Heart left ventricle (tissue), 16 donors: ENCODE measurements at regions of chr2 and their contacts with region 1.

Region 1: DNA sequence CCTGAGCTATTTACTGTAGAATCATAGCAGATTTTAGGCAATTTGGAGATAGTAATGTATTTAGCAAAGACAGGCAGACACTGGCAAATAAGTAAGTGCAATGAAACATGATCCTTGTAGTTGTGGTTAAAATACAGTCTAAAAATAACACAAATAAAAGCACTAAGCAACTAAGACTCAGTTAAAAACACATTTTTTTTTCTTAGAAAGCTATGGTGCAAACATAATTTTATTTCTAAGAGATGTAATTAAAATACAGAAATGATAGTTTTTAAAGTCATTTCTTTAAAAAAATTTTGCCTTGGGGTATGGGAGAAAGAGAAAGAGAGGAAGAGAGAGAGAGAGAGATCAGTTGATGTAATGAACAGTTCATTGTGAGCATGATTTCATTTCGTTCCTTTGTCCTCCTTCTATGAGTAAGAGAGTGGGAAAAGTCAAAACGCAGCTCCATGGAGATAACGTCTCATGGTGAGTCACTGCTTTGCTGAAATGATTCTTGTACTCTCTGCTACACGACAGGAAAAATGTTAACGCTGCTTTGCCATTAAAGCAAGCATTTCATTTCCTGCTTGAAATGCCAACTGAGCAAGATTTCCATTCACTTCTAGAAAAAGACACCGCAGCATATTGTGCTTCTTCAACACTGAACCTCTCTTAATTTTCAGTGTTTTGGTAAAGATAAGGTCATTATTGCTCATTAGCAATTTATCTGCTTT is 61.3 kb upstream of the PGAP1 start:
- DNase-seq: peak in 2 of 5 donors; percentile 13 to 37
- ATAC-seq: peak; percentile 83 to 98 (median 96)
- H3K4me3 ChIP-seq: peak overlapping the region in 8 of 12 donors; percentile 3 to 34 (median 19)
- H3K27ac ChIP-seq: peak overlapping the region in 11 of 12 donors; percentile 51 to 84 (median 64)
- H3K4me1 ChIP-seq: peaks cover 0 to 42% (median 15%) of the 10 kb centered on the region in 12 donors
- H3K27me3 ChIP-seq: no peaks in the 10 kb centered on the region
- CTCF ChIP-seq: no peak
- POLR2A ChIP-seq: no peak

Region 2: GRCh38 chr2:196926562-196927375 is 61.0 kb before region 1 on chr2 and contains the start of gene PGAP1:
- intact Hi-C with region 1: loop called in 2 of 10 experiments (anchors 5 to 10 kb)
- DNase-seq: peak; percentile 90 to 95 (median 92)
- ATAC-seq: peak; percentile 95 to 99 (median 98)
- H3K4me3 ChIP-seq: peak within 1 kb of the TSS; percentile 59 to 98 (median 82)
- H3K27ac ChIP-seq: peak within 1 kb of the TSS; percentile 59 to 92 (median 89)
- H3K4me1 ChIP-seq: peaks cover 0 to 27% (median 10%) of the 10 kb centered on the region in 12 donors
- H3K27me3 ChIP-seq: no peaks in the 10 kb centered on the region
- CTCF ChIP-seq: no peak
- POLR2A ChIP-seq: peak in 1 of 2 donors; percentile 81
- total RNA-seq, gene PGAP1: 3.6 to 8.8 (median 5.8) TPM